Gastrocnemius medialis (tissue), 4 donors: ENCODE measurements at regions of chr1 and their contacts with region 1.

Region 1: DNA sequence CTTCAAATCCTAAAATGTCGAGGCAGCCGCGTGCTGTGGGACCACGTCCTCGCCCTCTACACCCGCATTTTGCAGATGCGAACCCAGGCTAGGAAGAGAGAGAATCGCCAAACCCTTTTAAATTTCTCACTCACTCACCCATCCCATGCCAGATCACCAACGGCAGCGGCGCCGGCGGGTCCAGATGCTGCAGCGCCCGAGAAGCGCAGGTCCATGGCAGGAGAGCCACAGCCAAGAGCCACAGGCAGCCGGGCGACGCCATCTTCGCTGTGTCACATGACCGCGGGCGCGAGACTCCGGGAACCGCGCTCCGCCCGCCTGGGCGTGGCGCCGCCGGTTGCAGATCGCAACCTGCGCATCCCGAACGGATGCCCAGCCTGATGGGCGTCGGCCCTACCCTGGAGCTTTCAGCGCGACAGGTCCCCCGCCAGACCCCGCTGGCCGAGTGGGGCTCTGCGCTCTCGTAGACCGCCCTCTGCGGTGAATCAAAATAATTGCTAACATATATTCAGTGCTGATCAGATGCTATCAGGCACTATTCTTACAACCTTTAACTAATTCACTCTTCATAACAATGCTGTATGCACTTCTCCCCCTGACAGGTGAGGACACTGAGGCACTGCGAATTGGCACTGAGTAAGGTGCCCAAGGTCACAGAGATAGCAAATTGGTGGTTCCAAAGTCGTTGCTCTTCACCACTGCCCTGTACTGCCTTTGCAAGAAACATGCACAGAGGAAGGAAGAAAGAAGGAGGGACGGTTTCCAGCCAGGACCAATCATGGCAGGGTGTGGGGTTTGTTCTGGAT is at the start of gene PPT1:
- DNase-seq: peak; percentile 53 to 55
- ATAC-seq: peak; percentile 84 to 91
- H3K4me3 ChIP-seq: peak within 1 kb of the TSS; percentile 74 to 83 (median 78)
- H3K27ac ChIP-seq: peak within 1 kb of the TSS; percentile 59 to 75 (median 65)
- H3K4me1 ChIP-seq: peaks cover 12 to 13% of the 10 kb centered on the region in 2 donors
- H3K27me3 ChIP-seq: no peaks in the 10 kb centered on the region
- CTCF ChIP-seq: peak in 1 of 5 experiments; percentile 22
- POLR2A ChIP-seq: peak in 1 of 2 donors; percentile 14
- total RNA-seq, gene PPT1: 8.5 to 23.2 (median 13.4) TPM

Region 2: GRCh38 chr1:40014812-40015594 is 82.2 kb before region 1 on chr1:
- in situ Hi-C with region 1: no loop called
- intact Hi-C with region 1: no loop called
- DNase-seq: no peak
- ATAC-seq: no peak
- H3K4me3 ChIP-seq: no peak overlapping the region
- H3K27ac ChIP-seq: no peak overlapping the region
- H3K4me1 ChIP-seq: no peaks in the 10 kb centered on the region
- H3K27me3 ChIP-seq: no peaks in the 10 kb centered on the region
- CTCF ChIP-seq: no peak
- POLR2A ChIP-seq: no peak

Region 3: GRCh38 chr1:40161125-40161887 is 64.1 kb after region 1 on chr1 and contains the start of gene RLF:
- in situ Hi-C with region 1: no loop called
- intact Hi-C with region 1: loop called (anchors 5 kb)
- DNase-seq: peak; percentile 88 to 92
- ATAC-seq: peak; percentile 95 to 97
- H3K4me3 ChIP-seq: peak within 1 kb of the TSS; percentile 73 to 98 (median 89)
- H3K27ac ChIP-seq: peak within 1 kb of the TSS; percentile 92 to 99 (median 96)
- H3K4me1 ChIP-seq: peaks cover 44 to 45% of the 10 kb centered on the region in 2 donors
- H3K27me3 ChIP-seq: no peaks in the 10 kb centered on the region
- CTCF ChIP-seq: no peak
- POLR2A ChIP-seq: peak; percentile 97 to 98
- total RNA-seq, gene RLF: 12.3 to 15.9 (median 15.0) TPM